H1 (cell line): ENCODE measurements at regions of chr3 and their contacts with region 1.

Region 1: DNA sequence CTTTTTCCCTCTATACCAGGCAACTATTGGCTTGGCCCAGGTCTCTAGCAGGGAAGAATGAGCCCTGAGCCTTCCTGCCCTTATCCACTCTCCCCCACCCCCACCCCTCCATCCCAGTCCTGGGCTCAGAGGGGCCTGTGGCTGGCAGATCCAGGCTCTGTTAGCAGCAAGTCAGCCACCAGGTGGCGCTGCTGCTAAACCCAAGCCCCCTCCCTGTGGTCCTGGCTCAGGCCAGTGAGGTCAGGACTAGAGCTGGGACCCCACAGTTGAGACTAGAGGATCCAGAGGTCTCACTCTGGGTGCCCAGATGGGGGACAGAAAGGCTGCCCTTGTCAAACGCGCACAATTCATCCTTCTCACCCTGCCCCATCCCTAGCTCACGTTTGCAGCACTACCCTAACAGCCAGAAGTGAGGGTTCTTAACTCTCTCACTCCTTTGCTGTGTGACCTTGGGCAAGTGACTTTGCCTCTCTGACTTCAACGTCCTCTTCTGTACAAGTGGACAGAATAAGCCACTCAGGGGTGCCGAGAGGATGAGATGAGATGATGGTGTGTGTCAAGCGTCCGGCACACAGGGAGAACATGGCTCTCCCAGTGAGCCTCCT is 46.8 kb upstream of the SLC6A1 start:
- DNase-seq: peak; percentile 64 to 92
- H3K4me3 ChIP-seq: no peak overlapping the region
- H3K27ac ChIP-seq: no peak overlapping the region
- H3K4me1 ChIP-seq: no peaks in the 10 kb centered on the region
- H3K27me3 ChIP-seq: no peaks in the 10 kb centered on the region; a peak in 1 of 7 replicates
- CTCF ChIP-seq: peak; percentile 79 to 96 (median 89)
- EP300 ChIP-seq: no peak
- POLR2A ChIP-seq: no peak
- RAD21 ChIP-seq: peak; percentile 84 to 94

Region 2: GRCh38 chr3:10703875-10704274 is 241.9 kb before region 1 on chr3:
- CTCF ChIA-PET with region 1: no interaction called
- POLR2A ChIA-PET with region 1: no interaction called
- DNase-seq: peak; percentile 49 to 66
- H3K4me3 ChIP-seq: no peak overlapping the region
- H3K27ac ChIP-seq: no peak overlapping the region
- H3K4me1 ChIP-seq: peaks cover 2 to 10% (median 6%) of the 10 kb centered on the region in 4 experiments
- H3K27me3 ChIP-seq: peaks cover 8 to 39% (median 31%) of the 10 kb centered on the region in 4 experiments
- CTCF ChIP-seq: peak; percentile 78 to 87 (median 79)
- EP300 ChIP-seq: peak in 1 of 2 experiments; percentile 84; a peak in 1 of 3 replicates
- POLR2A ChIP-seq: no peak
- RAD21 ChIP-seq: peak; percentile 90 to 95

Region 3: GRCh38 chr3:10758304-10759061 is 187.3 kb before region 1 on chr3:
- CTCF ChIA-PET with region 1: interaction called, 18 read pairs
- POLR2A ChIA-PET with region 1: no interaction called
- DNase-seq: peak in 1 of 2 experiments; percentile 69
- H3K4me3 ChIP-seq: no peak overlapping the region
- H3K27ac ChIP-seq: no peak overlapping the region
- H3K4me1 ChIP-seq: peaks cover 0 to 5% (median 0%) of the 10 kb centered on the region in 4 experiments; a peak in 3 of 7 replicates
- H3K27me3 ChIP-seq: peaks cover 0 to 2% (median 0%) of the 10 kb centered on the region in 4 experiments; a peak in 2 of 7 replicates
- CTCF ChIP-seq: peak; percentile 85 to 98 (median 94)
- EP300 ChIP-seq: no peak
- POLR2A ChIP-seq: no peak
- RAD21 ChIP-seq: peak; percentile 96 to 99

Region 4: GRCh38 chr3:10915376-10915775 is 30.4 kb before region 1 on chr3:
- CTCF ChIA-PET with region 1: interaction called, 10 read pairs
- POLR2A ChIA-PET with region 1: no interaction called
- DNase-seq: no peak
- H3K4me3 ChIP-seq: no peak overlapping the region
- H3K27ac ChIP-seq: no peak overlapping the region
- H3K4me1 ChIP-seq: no peaks in the 10 kb centered on the region
- H3K27me3 ChIP-seq: no peaks in the 10 kb centered on the region
- CTCF ChIP-seq: no peak
- EP300 ChIP-seq: no peak
- POLR2A ChIP-seq: no peak
- RAD21 ChIP-seq: no peak

Region 5: GRCh38 chr3:10957976-10958749 is 12.4 kb after region 1 on chr3:
- CTCF ChIA-PET with region 1: interaction called, 62 read pairs
- POLR2A ChIA-PET with region 1: no interaction called
- DNase-seq: no peak
- H3K4me3 ChIP-seq: no peak overlapping the region
- H3K27ac ChIP-seq: no peak overlapping the region
- H3K4me1 ChIP-seq: no peaks in the 10 kb centered on the region; a peak in 1 of 7 replicates
- H3K27me3 ChIP-seq: no peaks in the 10 kb centered on the region
- CTCF ChIP-seq: no peak
- EP300 ChIP-seq: no peak
- POLR2A ChIP-seq: no peak
- RAD21 ChIP-seq: no peak

Region 6: DNA sequence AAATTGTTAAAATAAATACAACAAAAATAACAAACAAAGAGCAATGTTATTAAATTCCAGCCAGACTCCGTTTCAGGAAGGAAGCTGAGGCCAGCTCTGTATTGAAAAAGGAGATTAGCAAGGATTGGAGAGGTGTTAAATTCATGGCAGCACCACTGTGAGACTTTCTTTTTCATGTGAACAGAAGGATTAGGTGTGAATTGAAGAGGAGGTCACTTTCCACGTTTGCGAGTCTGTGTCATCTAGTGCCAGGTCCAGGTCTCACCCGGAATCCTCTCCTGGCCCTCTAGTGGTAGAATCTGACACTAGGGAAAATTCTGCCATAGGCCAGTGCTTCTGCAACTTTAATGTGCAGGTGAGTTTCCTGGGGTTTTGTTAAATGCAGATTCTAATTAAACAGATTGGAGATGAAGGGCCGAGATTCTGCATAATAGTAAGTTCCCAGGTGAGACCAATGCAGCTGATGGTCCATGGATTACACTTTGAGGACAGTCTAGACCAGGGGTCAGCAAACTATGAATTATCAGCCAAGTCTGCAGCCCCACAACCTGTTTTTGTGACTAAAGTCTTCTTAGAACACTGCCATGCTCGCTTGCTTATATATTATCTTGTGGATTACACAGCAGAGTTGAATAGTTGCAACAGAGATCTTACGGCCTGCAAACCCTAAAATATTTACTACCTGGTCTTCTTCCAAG is 37.6 kb after region 1 on chr3:
- CTCF ChIA-PET with region 1: interaction called, 207 read pairs
- POLR2A ChIA-PET with region 1: no interaction called
- DNase-seq: peak in 1 of 2 experiments; percentile 60
- H3K4me3 ChIP-seq: no peak overlapping the region
- H3K27ac ChIP-seq: no peak overlapping the region
- H3K4me1 ChIP-seq: peaks cover 0 to 6% (median 3%) of the 10 kb centered on the region in 4 experiments; a peak in 5 of 7 replicates
- H3K27me3 ChIP-seq: no peaks in the 10 kb centered on the region
- CTCF ChIP-seq: peak; percentile 68 to 83 (median 76)
- EP300 ChIP-seq: no peak
- POLR2A ChIP-seq: no peak
- RAD21 ChIP-seq: peak; percentile 52 to 64

Region 7: DNA sequence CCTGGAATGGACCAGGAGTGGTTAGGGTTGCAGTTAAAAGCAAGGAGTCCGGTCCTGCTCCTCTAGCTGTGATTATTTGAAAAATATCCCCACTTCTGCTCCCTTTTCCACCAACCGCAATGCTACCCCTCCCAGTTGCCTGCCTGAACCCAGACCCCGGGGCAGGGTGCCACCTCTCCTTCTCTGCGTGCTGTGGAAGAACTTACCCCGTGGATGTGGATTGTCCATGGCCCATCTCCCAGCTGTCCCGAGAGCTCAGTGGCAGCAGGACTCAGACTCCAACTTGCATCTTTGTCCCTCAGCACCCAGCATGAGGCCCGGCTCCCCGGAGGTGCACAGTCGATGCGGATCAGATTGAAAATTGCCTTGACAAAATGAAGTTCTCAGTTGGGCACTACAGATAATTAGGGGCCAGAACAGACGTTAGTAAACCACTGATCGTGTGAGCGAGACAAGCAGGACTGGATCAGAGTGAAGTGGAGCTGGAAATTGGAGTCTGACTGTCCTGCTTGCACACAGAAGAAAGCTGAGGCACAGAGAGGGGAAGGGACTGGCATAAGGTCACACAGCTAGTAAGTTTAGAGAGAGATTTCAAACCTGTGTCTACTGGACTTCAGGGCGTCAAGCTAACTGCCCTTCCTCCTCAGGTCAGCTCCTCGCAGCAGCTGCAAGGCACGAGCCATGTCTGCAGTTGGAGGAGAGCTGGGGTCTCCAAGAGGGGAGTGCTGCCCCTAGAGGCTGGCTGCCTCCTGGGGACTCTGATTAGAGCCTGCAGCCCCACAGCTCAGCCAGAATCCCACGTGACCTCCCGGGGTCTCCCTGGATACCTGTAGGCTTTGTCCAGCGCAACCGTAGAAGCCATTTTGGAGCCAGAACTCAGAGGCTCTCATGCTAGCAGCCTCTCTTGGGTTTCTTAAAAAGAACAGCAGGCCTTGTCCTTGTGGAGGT is 61.5 kb after region 1 on chr3:
- CTCF ChIA-PET with region 1: interaction called, 48 read pairs
- POLR2A ChIA-PET with region 1: no interaction called
- DNase-seq: peak in 1 of 2 experiments; percentile 61
- H3K4me3 ChIP-seq: no peak overlapping the region
- H3K27ac ChIP-seq: no peak overlapping the region
- H3K4me1 ChIP-seq: peaks cover 0 to 4% (median 0%) of the 10 kb centered on the region in 4 experiments; a peak in 3 of 7 replicates
- H3K27me3 ChIP-seq: no peaks in the 10 kb centered on the region
- CTCF ChIP-seq: peak; percentile 48 to 70 (median 56)
- EP300 ChIP-seq: no peak
- POLR2A ChIP-seq: no peak
- RAD21 ChIP-seq: peak; percentile 36 to 45; a peak in 3 of 4 replicates

Region 8: GRCh38 chr3:11045536-11045935 is 99.8 kb after region 1 on chr3:
- CTCF ChIA-PET with region 1: interaction called, 11 read pairs
- POLR2A ChIA-PET with region 1: no interaction called
- DNase-seq: no peak
- H3K4me3 ChIP-seq: no peak overlapping the region
- H3K27ac ChIP-seq: no peak overlapping the region
- H3K4me1 ChIP-seq: no peaks in the 10 kb centered on the region
- H3K27me3 ChIP-seq: no peaks in the 10 kb centered on the region
- CTCF ChIP-seq: peak; percentile 26 to 49 (median 43); a peak in 3 of 4 replicates
- EP300 ChIP-seq: no peak
- POLR2A ChIP-seq: no peak
- RAD21 ChIP-seq: peak in 1 of 2 experiments; percentile 30; a peak in 1 of 4 replicates